ENCODE measurements at regions of chr11 and their contacts with region 1.

Region 1: GRCh38 chr11:111378861-111379601 is at the start of gene POU2AF1:
- DNase-seq: peak; percentile 68
- H3K4me3 Mint-ChIP-seq: peak within 1 kb of the TSS; percentile 80
- H3K27ac Mint-ChIP-seq: peak within 1 kb of the TSS; percentile 98
- H3K4me1 Mint-ChIP-seq: peaks cover 73% of the 10 kb centered on the region
- H3K27me3 Mint-ChIP-seq: no peaks in the 10 kb centered on the region
- total RNA-seq, gene POU2AF1: 35.2 and 37.2 TPM in 2 replicates

Region 2: DNA sequence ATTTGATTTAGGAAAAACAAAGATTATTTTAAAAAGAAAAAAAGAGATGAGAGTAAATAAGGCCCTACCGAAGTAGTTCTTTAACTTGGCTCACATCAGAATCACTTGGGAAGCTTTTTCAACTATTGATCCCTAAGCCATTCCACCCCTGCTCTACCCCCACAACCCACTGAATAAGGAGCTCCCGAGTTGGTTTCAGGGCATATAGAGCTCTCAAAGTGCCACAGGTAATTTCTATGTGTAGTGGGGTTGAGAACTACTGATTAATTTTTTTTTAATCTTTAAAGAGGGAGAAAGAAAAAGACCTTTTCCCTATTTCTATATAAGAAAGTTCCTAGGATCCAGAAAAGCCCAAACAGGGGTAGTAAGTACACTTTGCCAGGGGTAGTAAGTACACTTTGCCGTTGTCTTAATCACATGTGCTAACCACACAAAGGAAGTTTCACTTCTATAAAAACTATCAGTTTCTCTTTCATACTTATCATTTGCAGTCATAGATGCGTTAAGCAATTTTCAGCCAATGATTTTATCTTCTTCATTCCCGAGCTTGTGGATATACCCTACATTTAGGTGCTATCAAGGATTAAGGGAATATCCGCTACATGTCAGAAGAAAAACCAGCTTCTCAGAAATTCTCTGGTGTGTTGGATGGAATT is 1394.3 kb before region 1 on chr11:
- intact Hi-C with region 1: loop called (anchors 10 kb)
- DNase-seq: no peak
- H3K4me3 Mint-ChIP-seq: no peak overlapping the region
- H3K27ac Mint-ChIP-seq: peak overlapping the region; percentile 51
- H3K4me1 Mint-ChIP-seq: peaks cover 28% of the 10 kb centered on the region
- H3K27me3 Mint-ChIP-seq: peaks cover 15% of the 10 kb centered on the region

Region 3: DNA sequence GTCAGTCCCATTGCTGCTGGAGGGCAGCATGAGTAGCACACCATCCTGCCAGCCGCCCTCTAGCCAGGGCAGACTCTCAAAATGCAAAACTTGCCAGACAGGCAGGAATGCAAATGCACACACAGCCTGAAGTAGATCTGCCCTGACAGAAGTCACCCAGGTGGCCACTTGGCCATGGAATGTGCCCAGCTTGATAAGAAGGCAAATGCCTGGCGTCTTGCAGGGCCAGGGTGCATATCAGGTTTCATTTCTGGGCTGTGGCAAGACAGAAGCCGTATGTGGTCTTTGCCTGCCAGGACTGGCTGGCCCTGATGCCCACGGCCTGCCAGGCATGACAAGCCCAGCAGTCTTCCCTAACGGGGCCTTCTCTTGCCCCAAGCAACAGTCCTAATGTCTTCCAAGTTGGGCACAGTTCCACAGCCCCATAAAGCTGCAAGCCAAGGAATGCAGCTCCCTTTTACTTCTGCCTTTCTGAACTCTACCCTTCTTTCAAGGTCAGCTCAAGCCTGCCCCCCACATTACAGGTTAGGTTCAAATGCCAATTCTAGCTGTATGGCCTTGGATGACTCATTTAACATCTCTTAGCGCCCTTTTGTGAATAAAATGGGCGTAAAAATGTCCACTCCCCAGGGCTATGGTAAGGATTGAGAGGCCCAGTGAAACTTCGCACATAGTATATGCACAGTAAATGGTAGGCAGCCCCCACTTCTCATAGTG is 51.0 kb before region 1 on chr11:
- intact Hi-C with region 1: no loop called
- DNase-seq: no peak
- H3K4me3 Mint-ChIP-seq: no peak overlapping the region
- H3K27ac Mint-ChIP-seq: no peak overlapping the region
- H3K4me1 Mint-ChIP-seq: no peaks in the 10 kb centered on the region
- H3K27me3 Mint-ChIP-seq: peaks cover 8% of the 10 kb centered on the region

Region 4: GRCh38 chr11:111393096-111393495 is 14.1 kb after region 1 on chr11:
- intact Hi-C with region 1: loop called (anchors 2 kb)
- DNase-seq: no peak
- H3K4me3 Mint-ChIP-seq: no peak overlapping the region
- H3K27ac Mint-ChIP-seq: no peak overlapping the region
- H3K4me1 Mint-ChIP-seq: peaks cover 19% of the 10 kb centered on the region
- H3K27me3 Mint-ChIP-seq: no peaks in the 10 kb centered on the region

Region 5: GRCh38 chr11:111520565-111520964 is 141.5 kb after region 1 on chr11:
- intact Hi-C with region 1: loop called (anchors 5 kb)
- DNase-seq: no peak
- H3K4me3 Mint-ChIP-seq: no peak overlapping the region
- H3K27ac Mint-ChIP-seq: no peak overlapping the region
- H3K4me1 Mint-ChIP-seq: peaks cover 27% of the 10 kb centered on the region
- H3K27me3 Mint-ChIP-seq: peaks cover 1% of the 10 kb centered on the region

Region 6: DNA sequence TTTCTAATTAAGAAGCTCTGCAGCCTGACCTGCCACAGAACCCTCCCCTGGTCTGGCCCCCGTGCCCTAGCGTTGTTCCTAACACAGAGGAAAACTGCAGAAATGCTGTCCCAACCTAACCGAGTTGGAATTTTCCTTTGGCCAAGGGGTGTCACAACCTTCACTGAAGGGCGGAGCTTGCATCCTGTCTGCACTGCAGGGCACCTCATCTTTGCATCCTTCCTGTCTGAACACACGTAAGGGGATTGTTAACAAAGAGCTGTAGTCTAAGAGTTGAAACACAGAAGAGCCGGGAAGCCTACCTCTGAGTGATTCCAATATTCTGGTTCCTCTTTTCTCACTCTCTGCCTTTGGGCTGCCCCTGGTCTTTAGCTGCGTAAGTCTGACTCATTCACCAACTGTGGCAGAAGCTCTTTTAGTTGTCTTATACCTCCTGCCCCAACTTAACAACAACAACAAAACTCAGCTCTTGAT is 559.7 kb after region 1 on chr11:
- intact Hi-C with region 1: loop called (anchors 5 kb)
- DNase-seq: no peak
- H3K4me3 Mint-ChIP-seq: peak overlapping the region; percentile 89
- H3K27ac Mint-ChIP-seq: peak overlapping the region; percentile 95
- H3K4me1 Mint-ChIP-seq: peaks cover 60% of the 10 kb centered on the region
- H3K27me3 Mint-ChIP-seq: no peaks in the 10 kb centered on the region

Measured in activated T-helper 2 cell treated with anti-CD3 and anti-CD28 coated beads, Interferon-gamma antibody, Interleukin-2, Interleukin-4, amounts not matched to agents 10 μg/mL and 5 μg/mL and 100 μg/mL, durations not matched to agents 14 hours and 24 hours and 36 hours (primary cell).